ENCODE measurements at regions of chr16 and their contacts with region 1.

Region 1: DNA sequence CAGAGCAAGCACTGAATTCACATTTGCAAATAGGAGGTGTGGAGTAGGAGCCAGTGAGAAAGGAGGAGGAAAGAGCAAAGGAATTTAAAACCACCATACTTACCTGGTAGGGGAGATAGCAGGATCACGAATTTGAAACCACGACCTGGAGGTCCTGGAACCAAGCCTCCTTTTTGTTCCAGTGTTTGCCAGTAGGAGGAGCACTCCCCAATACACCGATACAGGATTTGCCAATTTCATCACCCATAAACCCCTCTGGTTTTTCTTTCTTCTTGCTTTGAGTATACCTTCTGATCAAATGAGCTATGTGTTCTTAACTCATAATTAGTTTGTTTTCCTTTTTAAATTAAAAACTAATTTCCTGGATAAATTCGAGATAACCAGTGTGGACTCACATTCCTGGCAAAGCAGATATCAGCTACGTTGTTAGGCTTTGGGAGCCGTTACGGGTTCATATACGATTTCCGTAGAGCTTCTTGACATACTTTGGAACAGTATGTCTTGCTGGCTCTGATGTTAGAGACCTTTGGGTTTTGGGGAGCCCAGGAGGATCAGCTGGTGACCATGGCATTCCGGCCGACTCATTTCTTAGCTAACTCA is 22.7 kb downstream of the BCO1 start:
- DNase-seq: no peak
- H3K4me3 ChIP-seq: no peak overlapping the region
- H3K27ac ChIP-seq: no peak overlapping the region
- H3K27me3 ChIP-seq: peaks cover 5% of the 10 kb centered on the region
- CTCF ChIP-seq: peak; percentile 67

Region 2: GRCh38 chr16:80997139-80997798 is 263.9 kb before region 1 on chr16:
- CTCF ChIA-PET with region 1: no interaction called
- POLR2A ChIA-PET with region 1: no interaction called
- DNase-seq: no peak
- H3K4me3 ChIP-seq: no peak overlapping the region
- H3K27ac ChIP-seq: no peak overlapping the region
- H3K27me3 ChIP-seq: no peaks in the 10 kb centered on the region
- CTCF ChIP-seq: no peak

Region 3: GRCh38 chr16:81273223-81273950 is 12.2 kb after region 1 on chr16:
- CTCF ChIA-PET with region 1: interaction called, 17 read pairs
- POLR2A ChIA-PET with region 1: no interaction called
- DNase-seq: no peak
- H3K4me3 ChIP-seq: no peak overlapping the region
- H3K27ac ChIP-seq: no peak overlapping the region
- H3K27me3 ChIP-seq: peaks cover 2% of the 10 kb centered on the region
- CTCF ChIP-seq: no peak

Region 4: GRCh38 chr16:81314603-81315270 is 53.6 kb after region 1 on chr16 and contains the start of gene GAN:
- CTCF ChIA-PET with region 1: interaction called, 16 read pairs
- POLR2A ChIA-PET with region 1: no interaction called
- DNase-seq: peak; percentile 88
- H3K4me3 ChIP-seq: peak within 1 kb of the TSS; percentile 72
- H3K27ac ChIP-seq: peak within 1 kb of the TSS; percentile 40
- H3K27me3 ChIP-seq: no peaks in the 10 kb centered on the region
- CTCF ChIP-seq: no peak
- polyA plus RNA-seq, gene GAN: 3.3 and 4.3 TPM in 2 replicates

Region 5: DNA sequence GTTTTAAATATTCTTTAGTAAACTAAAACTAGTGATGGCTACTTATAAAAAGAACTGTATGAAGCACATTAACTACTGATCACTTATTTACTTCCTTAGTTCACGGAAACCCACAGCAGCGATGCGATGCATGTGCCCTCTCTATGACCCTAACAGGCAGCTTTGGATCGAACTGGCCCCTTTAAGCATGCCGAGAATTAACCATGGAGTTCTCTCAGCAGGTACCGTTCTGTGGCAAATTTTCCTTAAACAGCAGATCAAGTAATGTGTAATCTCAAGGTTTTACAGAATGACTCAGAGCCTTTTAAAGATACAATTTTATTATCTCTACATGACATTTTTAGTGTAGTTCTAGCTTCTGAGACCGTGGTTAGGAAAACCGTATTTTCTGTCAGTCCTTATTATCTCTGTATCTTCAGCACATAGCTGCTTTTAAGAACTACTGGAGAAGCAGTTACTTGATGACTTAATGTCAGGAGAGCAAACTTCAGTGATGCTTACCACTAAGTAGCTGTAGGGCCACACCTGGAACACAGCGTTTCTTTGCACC is 96.6 kb after region 1 on chr16:
- CTCF ChIA-PET with region 1: no interaction called
- POLR2A ChIA-PET with region 1: no interaction called
- DNase-seq: no peak
- H3K4me3 ChIP-seq: no peak overlapping the region
- H3K27ac ChIP-seq: no peak overlapping the region
- H3K27me3 ChIP-seq: no peaks in the 10 kb centered on the region
- CTCF ChIP-seq: no peak

Region 6: GRCh38 chr16:81445143-81445974 is 184.2 kb after region 1 on chr16:
- CTCF ChIA-PET with region 1: no interaction called
- POLR2A ChIA-PET with region 1: no interaction called
- DNase-seq: no peak
- H3K4me3 ChIP-seq: peak overlapping the region; percentile 79
- H3K27ac ChIP-seq: no peak overlapping the region
- H3K27me3 ChIP-seq: peaks cover 31% of the 10 kb centered on the region
- CTCF ChIP-seq: peak; percentile 21; the same call in 1 of the 2 replicates

Measured in AG04450 (cell line).